Left cardiac atrium (tissue), 4 donors: ENCODE measurements at regions of chrX and their contacts with region 1.

Region 1: GRCh38 chrX:70262952-70263567 is 3.1 kb upstream of the P2RY4 start:
- DNase-seq: peak; percentile 27
- ATAC-seq: peak; percentile 59 to 80

Region 2: GRCh38 chrX:70013466-70014381 is 249.3 kb before region 1 on chrX:
- intact Hi-C with region 1: no loop called
- DNase-seq: peak; percentile 36
- ATAC-seq: peak; percentile 90 to 95

Region 3: DNA sequence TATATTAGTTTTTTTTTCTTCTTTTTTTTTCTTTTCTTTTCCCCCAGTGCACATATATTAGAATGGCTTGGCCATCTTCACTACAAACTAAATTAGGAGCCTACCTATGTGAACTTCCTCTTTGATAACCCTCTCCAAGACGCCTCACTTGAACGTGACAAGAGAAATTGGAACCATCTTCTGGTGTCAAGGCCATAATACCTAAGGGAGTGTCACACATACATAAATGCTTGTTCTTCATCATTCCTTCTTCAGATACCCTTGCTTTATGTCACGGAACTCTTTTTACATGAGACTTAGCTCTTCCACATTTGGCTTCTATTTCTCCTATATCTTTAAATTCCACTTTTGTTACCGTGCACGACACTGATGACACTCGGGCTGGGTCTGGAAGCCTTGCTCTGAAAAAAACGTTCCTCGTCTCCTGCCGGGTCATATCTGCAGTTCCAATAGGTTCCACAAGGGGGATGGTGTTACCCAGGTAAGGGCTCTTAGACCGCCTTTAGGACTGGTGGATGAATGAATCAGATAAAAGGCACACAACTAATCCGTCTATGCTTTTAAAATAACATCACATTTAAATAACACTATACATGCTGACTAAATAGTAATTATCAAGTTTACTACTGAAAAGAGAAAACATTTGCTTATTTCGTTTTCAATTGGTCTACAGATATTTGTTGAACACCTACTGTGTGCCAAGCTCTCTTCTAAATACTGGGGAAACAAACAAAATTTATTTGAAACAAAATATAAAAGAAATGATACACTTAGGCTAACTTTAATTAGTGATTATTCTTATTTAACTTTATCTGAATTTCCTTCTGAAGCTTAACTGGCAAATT is 65.9 kb before region 1 on chrX:
- intact Hi-C with region 1: loop called (anchors 10 kb)
- DNase-seq: peak; percentile 27
- ATAC-seq: peak in 1 of 2 donors; percentile 65

Region 4: DNA sequence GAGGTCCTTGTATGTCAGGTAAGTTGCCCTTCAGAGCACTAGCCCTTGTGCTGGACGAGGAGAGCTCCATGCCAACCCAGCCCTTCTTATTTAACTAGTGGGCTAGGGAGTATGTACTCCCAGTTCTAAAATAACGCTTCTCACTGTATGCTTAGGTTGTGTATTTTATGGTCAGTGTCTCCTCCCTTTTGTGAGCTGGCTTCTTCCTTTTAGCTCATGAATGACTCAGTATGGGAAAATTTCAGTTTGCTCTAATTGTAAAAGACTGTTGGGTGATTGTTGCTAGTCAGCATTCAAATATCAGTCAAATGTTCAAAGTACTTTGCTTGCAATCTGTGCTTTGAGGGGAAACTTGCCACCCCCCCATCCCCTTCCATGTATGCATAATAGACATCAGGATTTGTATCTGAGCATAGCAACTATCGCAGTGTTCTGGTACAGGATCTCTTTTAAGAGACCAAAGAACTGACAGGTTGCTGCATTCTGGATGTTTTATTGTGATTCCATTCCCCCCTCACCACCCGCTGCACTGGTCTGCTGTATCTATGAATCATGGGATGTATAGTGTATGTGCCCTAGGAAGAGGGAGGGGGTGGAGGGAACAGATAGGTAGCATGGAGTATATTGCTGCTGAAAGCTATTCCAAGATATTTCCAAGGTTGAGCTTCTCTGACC is 216.3 kb after region 1 on chrX:
- intact Hi-C with region 1: no loop called
- DNase-seq: no peak
- ATAC-seq: peak in 1 of 2 donors; percentile 56

Region 5: DNA sequence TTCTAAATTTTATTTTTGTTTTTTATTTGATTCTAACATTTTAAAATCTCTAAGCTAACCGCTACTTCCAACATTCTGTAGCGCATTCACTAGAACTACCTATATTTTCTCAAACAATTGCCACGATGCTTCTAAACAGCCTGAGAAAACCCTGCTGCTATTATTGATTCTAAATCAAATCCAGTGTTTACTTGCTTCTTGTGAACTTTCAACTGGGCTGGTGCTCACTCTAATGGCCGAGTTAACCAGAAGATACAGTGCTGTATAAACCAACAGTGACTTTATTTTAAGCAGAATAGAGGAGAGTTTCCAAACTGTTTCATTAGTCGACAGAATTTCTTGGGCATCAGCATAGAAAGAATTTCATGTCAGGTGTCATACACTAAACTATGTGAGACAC is 291.9 kb after region 1 on chrX:
- intact Hi-C with region 1: no loop called
- DNase-seq: no peak
- ATAC-seq: no peak